ENCODE measurements at regions of chr17 and their contacts with region 1.

Region 1: GRCh38 chr17:44947461-44948314 is at the start of gene KIF18B:
- DNase-seq: peak; percentile 98
- H3K4me3 Mint-ChIP-seq: peak within 1 kb of the TSS; percentile 95
- H3K27ac Mint-ChIP-seq: peak within 1 kb of the TSS; percentile 95
- H3K4me1 Mint-ChIP-seq: peaks cover 26% of the 10 kb centered on the region
- H3K27me3 Mint-ChIP-seq: no peaks in the 10 kb centered on the region
- total RNA-seq, gene KIF18B: 42.1 and 42.7 TPM in 2 replicates

Region 2: GRCh38 chr17:44899069-44899782 is 48.5 kb before region 1 on chr17 and contains the start of gene EFTUD2:
- intact Hi-C with region 1: loop called (anchors 2 kb)
- DNase-seq: peak; percentile 97
- H3K4me3 Mint-ChIP-seq: peak within 1 kb of the TSS; percentile 88
- H3K27ac Mint-ChIP-seq: peak within 1 kb of the TSS; percentile 99
- H3K4me1 Mint-ChIP-seq: peaks cover 18% of the 10 kb centered on the region
- H3K27me3 Mint-ChIP-seq: peaks cover 15% of the 10 kb centered on the region
- total RNA-seq, gene EFTUD2: 244 and 262 TPM in 2 replicates

Region 3: DNA sequence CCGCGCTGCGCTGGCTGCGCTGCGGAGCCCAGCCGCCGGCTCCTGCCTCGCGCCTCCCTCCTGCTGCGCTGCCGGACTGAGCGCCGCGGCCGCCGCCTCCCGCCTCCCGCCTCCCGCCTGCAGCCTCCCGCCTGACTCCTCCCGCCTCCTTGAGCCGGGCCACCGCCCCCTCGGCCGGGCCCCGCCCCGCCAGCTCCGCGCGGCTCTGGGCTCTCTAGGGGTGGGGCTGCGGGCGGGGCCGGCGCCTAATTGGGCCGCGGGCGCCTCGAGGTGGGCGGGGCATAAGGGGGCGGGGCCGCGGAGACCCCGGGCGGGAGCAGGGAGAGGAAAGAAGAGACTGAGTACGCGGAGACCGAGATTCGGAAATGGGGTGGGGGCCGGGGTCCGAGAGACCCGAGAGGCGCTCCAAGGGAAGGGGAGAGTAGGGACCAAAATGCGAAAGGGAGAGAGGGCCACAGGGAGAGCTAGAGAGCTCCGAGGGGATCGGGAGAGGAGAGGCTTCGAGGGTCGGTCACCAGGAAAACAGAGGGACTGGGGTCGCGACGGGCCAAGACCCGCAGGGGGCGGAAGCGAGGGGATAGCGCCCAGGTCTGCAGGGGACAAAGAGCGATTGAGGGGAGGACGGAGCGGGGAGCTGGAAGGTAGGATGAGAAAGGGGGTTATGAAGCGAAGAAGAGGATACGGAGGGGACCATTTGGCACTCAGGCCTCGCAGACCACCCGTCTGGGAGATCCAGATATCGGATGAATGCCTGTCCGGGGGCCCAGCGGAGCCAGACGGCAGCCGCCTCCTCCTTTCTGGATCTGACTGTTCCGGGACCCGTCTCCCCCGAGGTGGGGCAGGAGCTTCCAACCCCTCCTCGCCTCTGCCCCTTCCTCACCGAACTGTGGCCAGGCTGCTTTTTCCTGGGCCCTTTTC is 20.8 kb after region 1 on chr17 and contains the start of gene C1QL1:
- intact Hi-C with region 1: loop called (anchors 1 kb)
- DNase-seq: peak; percentile 97
- H3K4me3 Mint-ChIP-seq: peak within 1 kb of the TSS; percentile 91
- H3K27ac Mint-ChIP-seq: peak within 1 kb of the TSS; percentile 51
- H3K4me1 Mint-ChIP-seq: peaks cover 32% of the 10 kb centered on the region
- H3K27me3 Mint-ChIP-seq: peaks cover 68% of the 10 kb centered on the region
- total RNA-seq, gene C1QL1: 0.21 and 0.42 TPM in 2 replicates

Region 4: DNA sequence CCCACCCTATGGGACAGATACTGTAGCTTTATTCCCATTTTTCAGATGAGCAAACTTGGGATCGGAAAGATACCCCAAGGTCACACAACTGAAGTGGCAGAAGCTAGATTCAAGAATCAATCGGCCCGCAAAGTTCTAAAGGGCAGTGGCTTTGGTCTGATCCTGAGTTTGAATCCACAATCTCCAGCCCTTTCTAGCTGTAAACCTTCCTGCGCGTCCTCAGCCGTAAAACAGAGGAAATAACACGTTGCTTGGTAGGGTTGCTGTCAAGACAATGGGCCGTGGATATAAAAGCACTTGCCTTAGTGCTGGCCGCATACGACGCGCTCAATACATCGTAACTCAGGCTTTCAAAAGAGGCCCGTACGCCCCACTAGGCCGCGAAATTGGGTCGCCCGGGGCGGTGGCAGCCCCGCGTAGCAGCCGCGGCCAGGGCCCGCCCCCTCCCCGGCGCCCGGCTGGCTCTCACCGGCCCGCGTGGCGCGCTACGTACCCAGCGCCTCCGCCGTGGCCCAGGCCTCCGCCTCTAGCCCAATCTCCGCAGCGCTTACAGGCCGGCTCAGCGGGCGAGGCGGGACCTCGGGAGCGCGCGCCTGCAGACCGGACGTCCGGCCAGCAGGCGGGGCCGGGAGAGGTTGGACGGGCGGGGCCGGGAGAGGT is 103.5 kb after region 1 on chr17 and contains the start of gene DCAKD:
- intact Hi-C with region 1: loop called (anchors 2 kb)
- DNase-seq: peak; percentile 98
- H3K4me3 Mint-ChIP-seq: peak within 1 kb of the TSS; percentile 85
- H3K27ac Mint-ChIP-seq: peak within 1 kb of the TSS; percentile 93
- H3K4me1 Mint-ChIP-seq: peaks cover 33% of the 10 kb centered on the region
- H3K27me3 Mint-ChIP-seq: no peaks in the 10 kb centered on the region
- total RNA-seq, gene DCAKD: 24.6 and 25.4 TPM in 2 replicates

Measured in activated CD4-positive, alpha-beta T cell treated with anti-CD3 and anti-CD28 coated beads, Interleukin-2, amount 10 ng/mL, durations not matched to agents 24 days and 14 days (primary cell).